Activated T-helper 2 cell treated with anti-CD3 and anti-CD28 coated beads, Interferon-gamma antibody, Interleukin-2, Interleukin-4, amounts not matched to agents 10 μg/mL and 5 μg/mL and 100 μg/mL, durations not matched to agents 14 hours and 24 hours and 36 hours (primary cell): ENCODE measurements at regions of chr1 and their contacts with region 1.

Region 1: GRCh38 chr1:166910396-166910994 is 34.4 kb upstream of the TADA1 start:
- DNase-seq: peak; percentile 71
- H3K4me3 Mint-ChIP-seq: no peak overlapping the region
- H3K27ac Mint-ChIP-seq: no peak overlapping the region
- H3K4me1 Mint-ChIP-seq: peaks cover 26% of the 10 kb centered on the region
- H3K27me3 Mint-ChIP-seq: peaks cover 3% of the 10 kb centered on the region

Region 2: GRCh38 chr1:166808952-166809351 is 101.5 kb before region 1 on chr1:
- intact Hi-C with region 1: no loop called
- DNase-seq: no peak
- H3K4me3 Mint-ChIP-seq: no peak overlapping the region
- H3K27ac Mint-ChIP-seq: no peak overlapping the region
- H3K4me1 Mint-ChIP-seq: no peaks in the 10 kb centered on the region
- H3K27me3 Mint-ChIP-seq: peaks cover 8% of the 10 kb centered on the region

Region 3: GRCh38 chr1:166875734-166876539 is 34.6 kb before region 1 on chr1 and contains the start of gene TADA1:
- intact Hi-C with region 1: loop called (anchors 2 kb)
- DNase-seq: peak; percentile 98
- H3K4me3 Mint-ChIP-seq: peak within 1 kb of the TSS; percentile 96
- H3K27ac Mint-ChIP-seq: peak within 1 kb of the TSS; percentile 99
- H3K4me1 Mint-ChIP-seq: peaks cover 45% of the 10 kb centered on the region
- H3K27me3 Mint-ChIP-seq: peaks cover 2% of the 10 kb centered on the region
- total RNA-seq, gene TADA1: 15.3 and 16.0 TPM in 2 replicates

Region 4: GRCh38 chr1:166952002-166952746 is 41.7 kb after region 1 on chr1:
- intact Hi-C with region 1: loop called (anchors 1 kb)
- DNase-seq: no peak
- H3K4me3 Mint-ChIP-seq: no peak overlapping the region
- H3K27ac Mint-ChIP-seq: no peak overlapping the region
- H3K4me1 Mint-ChIP-seq: peaks cover 31% of the 10 kb centered on the region
- H3K27me3 Mint-ChIP-seq: peaks cover 21% of the 10 kb centered on the region

Region 5: DNA sequence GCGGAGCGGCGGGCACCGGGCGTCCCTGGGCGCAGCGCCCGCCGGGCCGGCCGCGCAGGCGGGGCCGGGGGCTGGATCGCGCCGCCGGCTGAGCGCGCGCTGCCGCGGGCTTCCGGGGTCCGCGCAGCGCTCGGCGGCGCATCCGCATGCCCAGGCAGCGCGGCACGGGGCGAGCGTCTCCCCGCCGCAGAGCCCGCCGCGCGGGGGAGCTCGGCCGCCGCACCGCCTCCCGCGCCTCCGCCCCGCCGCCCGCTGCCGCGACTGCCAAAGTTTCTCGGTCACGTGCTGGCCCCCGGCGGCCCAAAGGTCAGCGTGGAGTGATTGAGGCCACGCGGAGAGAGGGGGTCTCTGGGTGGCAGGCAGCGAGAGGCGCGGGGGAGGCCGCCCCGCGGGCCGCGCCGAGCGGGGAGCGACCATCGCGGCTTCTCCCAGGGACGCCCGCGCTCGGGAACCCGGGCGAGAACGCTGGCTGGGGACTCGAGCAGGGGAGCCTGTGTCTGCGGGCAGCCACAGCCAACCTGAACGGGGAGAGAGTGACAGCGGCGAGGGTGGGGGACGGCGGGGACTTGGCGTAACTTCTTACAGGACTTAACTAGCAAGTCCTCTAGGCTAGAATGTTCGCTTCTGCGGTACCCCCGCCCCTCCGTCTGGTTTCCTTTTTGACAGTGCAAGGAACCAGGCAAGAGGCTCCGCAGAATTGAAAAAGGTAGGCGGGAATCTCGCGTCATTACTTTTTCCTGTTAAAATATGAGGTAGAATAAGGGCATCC is 65.0 kb after region 1 on chr1 and contains the start of gene ILDR2:
- intact Hi-C with region 1: loop called (anchors 2 kb)
- DNase-seq: peak; percentile 54
- H3K4me3 Mint-ChIP-seq: peak within 1 kb of the TSS; percentile 97
- H3K27ac Mint-ChIP-seq: peak within 1 kb of the TSS; percentile 88
- H3K4me1 Mint-ChIP-seq: peaks cover 54% of the 10 kb centered on the region
- H3K27me3 Mint-ChIP-seq: peaks cover 18% of the 10 kb centered on the region
- total RNA-seq, gene ILDR2: 18.5 and 22.8 TPM in 2 replicates

Region 6: DNA sequence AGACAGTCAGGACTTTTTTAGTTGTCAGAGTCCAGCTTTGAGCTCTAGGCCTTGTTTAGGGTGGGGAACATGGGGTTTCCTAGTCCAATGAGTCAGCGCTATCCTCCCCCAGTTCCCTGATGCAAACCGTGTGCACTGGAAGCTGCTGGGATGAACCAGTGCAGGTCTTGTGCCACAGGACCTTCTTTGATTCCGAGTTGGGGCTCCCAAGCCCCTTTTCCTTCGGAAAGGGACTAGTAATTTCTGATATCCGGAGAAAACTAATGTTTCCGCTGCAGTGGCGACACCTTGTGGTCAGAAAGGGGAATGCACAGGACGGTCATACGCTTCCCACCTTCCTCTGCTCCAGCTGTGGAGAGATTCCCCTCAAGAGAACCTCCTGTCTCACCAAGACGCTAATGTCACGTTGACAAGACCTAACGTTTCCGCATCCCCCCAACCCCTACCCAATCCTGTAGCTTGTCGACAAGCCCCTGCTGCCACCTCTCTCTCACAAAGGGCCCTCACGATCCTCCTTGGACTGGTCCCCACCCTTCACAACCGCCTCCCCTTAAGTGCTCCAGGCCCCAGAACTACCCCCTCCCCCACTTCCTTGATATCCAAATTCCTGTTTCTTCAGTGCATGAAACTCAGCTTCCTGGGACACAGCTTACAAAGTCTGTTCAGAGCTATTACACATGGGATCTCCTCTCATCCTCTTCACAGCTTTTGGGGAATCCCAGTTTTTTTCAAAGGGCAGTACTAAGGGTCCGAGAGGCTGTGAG is 148.7 kb after region 1 on chr1:
- intact Hi-C with region 1: loop called (anchors 1 kb)
- DNase-seq: peak; percentile 48
- H3K4me3 Mint-ChIP-seq: no peak overlapping the region
- H3K27ac Mint-ChIP-seq: no peak overlapping the region
- H3K4me1 Mint-ChIP-seq: peaks cover 6% of the 10 kb centered on the region
- H3K27me3 Mint-ChIP-seq: no peaks in the 10 kb centered on the region

Region 7: GRCh38 chr1:167121375-167122120 is 211.1 kb after region 1 on chr1:
- intact Hi-C with region 1: loop called (anchors 5 kb)
- DNase-seq: no peak
- H3K4me3 Mint-ChIP-seq: peak overlapping the region; percentile 76
- H3K27ac Mint-ChIP-seq: no peak overlapping the region
- H3K4me1 Mint-ChIP-seq: no peaks in the 10 kb centered on the region
- H3K27me3 Mint-ChIP-seq: peaks cover 7% of the 10 kb centered on the region